ENCODE measurements at regions of chr17 and their contacts with region 1.

Region 1: GRCh38 chr17:17681187-17681848 is at the start of gene RAI1:
- DNase-seq: no peak
- H3K4me3 ChIP-seq: peak within 1 kb of the TSS; percentile 76
- CTCF ChIP-seq: peak; percentile 50

Region 2: DNA sequence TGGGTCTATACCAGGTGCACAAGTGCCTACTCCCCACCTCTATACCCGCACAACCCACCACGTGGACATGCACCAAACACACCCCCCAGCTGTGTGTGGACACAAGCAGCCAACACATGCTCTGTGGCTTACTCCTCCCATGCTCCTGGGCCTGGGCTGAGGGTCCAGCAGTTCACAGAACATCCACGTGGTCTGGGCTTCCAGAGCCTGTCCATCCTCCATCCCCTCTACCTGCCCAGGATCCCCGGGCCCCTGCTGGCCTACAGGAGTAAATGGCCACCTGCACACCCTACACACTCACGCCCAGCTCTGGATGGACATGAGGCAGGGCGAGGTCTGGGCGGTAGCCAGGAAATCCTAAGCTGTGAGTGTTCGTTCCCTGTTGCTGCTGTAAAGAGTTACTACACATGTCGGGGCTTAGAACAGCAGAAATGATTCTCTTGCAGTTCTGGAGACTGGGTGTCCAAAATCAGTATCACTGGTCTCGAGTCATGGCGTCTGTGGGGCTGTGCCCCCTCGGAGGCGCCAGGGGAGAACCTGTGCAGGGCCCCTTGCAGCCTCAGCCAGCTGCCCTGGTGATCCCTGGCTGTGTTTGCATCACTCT is 15.1 kb before region 1 on chr17:
- CTCF ChIA-PET with region 1: interaction called, 33 read pairs
- POLR2A ChIA-PET with region 1: no interaction called
- DNase-seq: peak; percentile 29
- H3K4me3 ChIP-seq: no peak overlapping the region
- CTCF ChIP-seq: no peak

Region 3: DNA sequence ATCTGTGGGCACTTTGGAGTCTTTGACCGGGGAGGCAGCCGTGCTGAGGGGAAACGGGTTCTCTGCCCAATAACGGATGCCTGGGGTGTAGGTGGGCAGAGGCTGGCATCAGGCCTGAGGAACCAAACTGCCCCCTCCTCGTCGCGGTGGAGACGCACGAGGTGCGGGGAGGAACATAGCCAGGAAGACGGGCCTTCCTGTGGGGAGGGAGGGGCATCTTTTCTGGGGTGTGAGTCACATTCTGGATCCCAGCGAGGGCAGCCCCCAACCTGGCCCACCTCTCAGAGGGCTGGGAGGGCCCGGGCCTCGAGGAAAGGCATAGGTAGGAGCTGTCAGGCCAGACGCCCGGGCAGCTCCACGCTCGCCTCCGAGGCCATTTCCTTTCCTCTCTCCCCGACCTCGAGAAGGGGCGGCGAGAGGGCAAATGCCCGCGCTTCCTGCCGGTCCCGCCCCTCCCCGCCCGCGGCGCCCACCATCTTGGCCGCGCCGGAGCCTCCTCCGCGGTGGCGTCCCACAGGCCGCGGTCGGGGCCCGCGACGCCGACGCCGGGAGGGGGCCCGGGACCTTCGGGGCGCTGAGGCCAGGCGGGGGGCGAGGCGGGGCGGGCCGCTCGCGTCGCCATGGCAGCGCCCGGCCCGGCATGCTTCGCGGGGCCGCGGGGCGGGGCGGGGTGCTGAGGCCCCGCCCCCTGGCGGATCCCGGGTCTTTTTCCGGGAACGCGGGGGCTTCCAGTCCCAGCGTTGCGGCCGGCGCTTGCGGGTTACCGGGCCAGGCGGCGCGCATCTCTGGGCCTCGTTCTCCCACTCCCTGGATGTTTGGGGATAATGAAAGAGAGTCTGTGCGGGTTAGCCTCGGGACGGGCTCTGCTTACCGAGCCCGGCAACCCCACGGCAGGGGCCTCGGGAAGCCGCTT is 13.1 kb after region 1 on chr17:
- CTCF ChIA-PET with region 1: interaction called, 9 read pairs
- POLR2A ChIA-PET with region 1: interaction called, 10 read pairs
- DNase-seq: no peak
- H3K4me3 ChIP-seq: peak overlapping the region; percentile 67
- CTCF ChIP-seq: no peak

Region 4: DNA sequence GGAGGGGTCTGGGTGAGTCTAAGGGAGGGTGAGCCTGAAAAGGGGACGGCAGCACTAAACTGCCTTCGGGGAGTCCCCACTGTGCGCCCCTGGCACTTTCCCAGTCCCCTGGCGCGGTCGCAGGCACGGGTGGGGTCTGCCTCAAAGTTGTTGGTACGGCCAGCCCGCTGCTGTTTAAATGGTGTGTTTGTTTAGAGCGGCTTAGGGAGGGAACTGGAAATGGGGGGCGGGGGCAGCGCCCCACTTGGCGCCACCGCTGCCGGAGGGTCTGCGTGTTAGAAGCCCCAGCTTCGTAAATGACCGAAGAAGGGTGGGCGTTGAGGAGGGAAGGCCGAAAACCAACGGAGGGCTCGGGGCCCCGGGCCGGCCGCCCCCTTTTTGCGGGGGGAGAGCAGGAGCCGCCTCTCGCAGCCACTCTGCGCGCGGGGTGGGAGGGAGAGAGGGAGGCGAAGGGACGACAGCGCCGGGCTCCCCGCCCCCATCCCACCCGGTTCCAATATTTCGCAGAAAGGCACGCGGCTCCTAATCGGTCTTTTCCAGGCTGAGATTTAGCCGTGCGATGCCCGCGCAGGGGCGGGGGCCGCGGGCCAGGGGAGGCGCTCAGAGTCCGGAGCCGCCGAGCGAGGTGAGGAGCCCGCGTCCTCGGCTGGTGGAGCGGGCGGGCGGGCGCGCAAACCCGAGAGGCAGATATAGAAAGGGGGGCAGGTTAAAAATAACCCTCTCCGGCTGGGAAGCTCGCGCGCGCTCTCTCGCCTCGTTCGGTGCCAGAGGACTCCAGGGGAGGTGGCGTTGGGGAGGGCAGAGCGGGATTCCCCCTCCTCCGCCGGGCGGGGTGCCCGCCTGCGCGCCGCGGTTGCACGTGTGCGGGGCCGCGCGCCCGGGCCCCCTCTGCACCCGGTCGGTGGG is 100.5 kb after region 1 on chr17:
- CTCF ChIA-PET with region 1: interaction called, 14 read pairs
- POLR2A ChIA-PET with region 1: interaction called, 3 read pairs
- DNase-seq: no peak
- H3K4me3 ChIP-seq: peak overlapping the region; percentile 43
- CTCF ChIP-seq: no peak